ENCODE measurements at regions of chr10 and their contacts with region 1.

Region 1: DNA sequence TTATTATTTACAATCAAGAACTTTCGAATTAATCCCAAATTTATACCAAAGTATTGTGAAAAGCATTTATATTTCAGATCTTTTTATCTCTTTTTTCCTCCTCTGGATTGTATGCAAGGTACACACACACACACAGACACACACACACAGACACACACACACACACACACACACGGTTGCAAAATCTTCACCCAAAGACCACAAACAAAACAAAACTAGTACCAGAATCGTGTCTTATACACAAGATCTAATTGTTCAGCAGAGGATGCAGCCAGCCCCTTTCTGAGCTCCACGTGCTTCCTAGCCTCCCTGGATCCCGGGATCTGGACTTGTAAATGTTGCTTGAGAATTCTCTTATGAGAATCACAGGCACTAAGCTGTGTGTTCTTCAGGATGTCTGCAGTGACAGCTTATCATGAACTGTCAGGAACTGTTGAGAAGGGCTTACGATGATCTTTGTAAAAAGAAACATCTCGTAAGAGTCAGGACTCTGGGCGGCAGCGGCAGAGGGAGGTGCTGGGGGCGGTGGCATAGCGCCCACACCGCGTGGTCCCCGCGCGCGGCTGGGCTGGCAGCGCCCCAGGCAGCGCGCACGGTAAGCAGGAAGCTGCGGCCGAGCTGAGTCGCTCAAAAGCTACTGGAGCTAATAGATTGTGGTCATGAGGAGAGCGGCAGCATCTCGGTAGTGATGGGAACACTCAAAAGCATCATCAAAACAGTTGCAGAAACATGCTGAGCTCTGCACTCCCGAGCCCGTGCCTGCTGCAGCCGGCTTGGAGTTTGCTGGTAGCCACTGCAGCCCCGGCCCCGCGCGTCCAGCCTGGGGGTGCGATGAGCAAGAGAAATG is 277.6 kb downstream of the GATA3 start:
- DNase-seq: peak; percentile 89
- ATAC-seq: peak; percentile 94
- H3K4me3 Mint-ChIP-seq: peak overlapping the region; percentile 79
- H3K27ac Mint-ChIP-seq: peak overlapping the region; percentile 78
- H3K4me1 Mint-ChIP-seq: peaks cover 60% of the 10 kb centered on the region
- H3K27me3 Mint-ChIP-seq: peaks cover 2% of the 10 kb centered on the region

Region 2: DNA sequence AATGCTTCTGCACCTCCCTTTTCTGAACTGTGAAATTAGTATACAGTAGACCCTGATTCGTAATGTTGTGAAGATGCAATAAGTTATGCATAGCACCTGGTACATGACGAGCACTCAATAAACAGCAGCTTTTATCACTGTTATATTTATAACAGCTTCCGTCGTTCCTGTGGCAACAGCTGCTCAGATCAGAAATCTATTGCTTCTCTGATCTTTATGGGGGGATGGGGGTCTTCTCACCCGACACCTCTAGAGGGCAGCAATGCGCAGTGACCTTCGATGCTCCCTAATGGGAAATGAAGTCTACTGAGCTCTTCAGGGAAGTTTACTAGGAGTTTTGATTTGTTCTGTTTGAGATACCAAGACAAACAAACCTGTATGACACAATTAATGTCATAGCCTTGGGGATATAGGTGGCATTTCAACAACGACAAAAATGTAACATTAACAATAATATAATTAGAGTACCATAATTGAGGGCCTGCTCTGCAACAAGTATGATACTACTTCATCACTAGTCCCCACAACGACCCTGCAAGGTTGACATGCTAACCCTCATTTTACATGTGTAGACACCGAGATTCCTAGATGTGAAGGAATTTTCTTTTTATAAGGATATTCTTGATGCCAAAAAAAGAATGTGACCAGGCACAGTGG is 1210.8 kb before region 1 on chr10:
- CTCF ChIA-PET with region 1: no interaction called
- POLR2A ChIA-PET with region 1: no interaction called
- intact Hi-C with region 1: no loop called
- DNase-seq: peak; percentile 83
- ATAC-seq: peak; percentile 91
- H3K4me3 Mint-ChIP-seq: no peak overlapping the region
- H3K27ac Mint-ChIP-seq: no peak overlapping the region
- H3K4me1 Mint-ChIP-seq: peaks cover 5% of the 10 kb centered on the region
- H3K27me3 Mint-ChIP-seq: peaks cover 2% of the 10 kb centered on the region

Region 3: DNA sequence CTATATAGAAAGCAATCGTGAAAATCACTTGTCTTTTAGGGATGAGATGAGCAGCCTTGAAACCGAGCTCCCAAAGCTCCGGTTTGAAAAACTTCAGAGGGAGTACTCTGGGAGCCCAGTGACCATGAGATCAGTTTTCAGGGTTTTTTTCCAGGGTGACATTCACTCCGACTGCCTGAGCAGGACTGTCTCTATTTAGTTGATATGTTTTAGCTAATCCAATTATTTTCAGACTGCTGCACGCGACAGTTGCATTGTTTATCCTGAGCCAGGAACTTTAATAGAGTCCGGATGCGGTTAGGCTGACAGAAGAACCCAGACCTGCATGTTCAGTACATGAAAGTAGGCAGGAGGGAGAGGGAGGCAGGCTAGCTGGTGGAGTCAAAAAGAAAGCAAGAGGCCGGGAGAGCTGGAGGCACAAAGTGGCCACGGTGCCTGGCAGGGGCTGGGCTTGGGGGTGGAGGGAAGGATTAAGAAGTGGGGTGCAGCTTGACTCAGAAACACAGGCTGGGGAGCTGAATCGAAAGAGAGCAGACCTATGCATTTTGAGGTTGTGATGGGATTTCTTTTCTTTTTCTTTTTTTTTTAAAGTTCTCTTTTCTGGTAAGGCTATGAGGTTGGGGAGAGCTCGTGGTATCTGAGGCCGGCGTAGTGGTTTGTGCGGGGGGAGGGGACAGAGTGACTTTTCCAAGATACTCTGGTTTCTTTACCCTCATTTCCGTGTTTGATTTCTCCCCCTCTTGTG is 272.0 kb before region 1 on chr10:
- CTCF ChIA-PET with region 1: interaction called, 3 read pairs
- POLR2A ChIA-PET with region 1: no interaction called
- intact Hi-C with region 1: loop called in 1 of 2 experiments (anchors 2 kb)
- DNase-seq: peak; percentile 83
- ATAC-seq: peak; percentile 55
- H3K4me3 Mint-ChIP-seq: peak overlapping the region; percentile 96
- H3K27ac Mint-ChIP-seq: peak overlapping the region; percentile 81
- H3K4me1 Mint-ChIP-seq: peaks cover 77% of the 10 kb centered on the region
- H3K27me3 Mint-ChIP-seq: no peaks in the 10 kb centered on the region

Region 4: DNA sequence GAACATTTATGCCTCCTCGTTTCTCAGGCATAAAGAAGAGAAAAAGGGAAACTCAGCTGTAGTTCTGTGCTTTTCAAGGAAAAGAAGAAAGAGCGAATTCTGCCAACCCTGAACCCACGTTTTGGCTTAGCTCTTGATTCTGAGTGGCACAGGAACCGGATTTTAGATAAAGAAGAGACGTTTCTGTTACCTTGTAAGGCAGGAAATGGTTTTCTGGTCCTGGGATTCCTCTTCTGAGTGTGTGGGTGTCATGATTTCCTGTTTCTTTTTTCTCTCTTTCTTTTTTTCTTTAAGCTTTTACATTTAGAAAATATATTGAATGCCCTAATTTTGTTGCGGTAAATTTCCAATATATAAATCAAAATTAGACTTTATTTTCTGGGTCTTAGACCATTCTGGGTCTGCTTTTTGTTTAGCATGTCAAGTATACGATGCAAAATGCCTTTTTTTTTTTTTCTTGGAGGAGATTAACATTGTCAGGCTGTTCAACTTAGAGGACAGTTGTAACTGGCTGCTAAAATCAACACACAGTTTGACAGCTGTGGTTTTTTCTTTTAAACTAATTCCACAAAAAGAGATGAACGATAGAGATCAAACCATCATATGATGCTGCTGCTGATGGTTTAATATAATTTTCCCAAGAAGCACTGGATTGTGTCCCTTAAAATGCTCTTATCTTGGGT is 86.8 kb before region 1 on chr10:
- CTCF ChIA-PET with region 1: no interaction called
- POLR2A ChIA-PET with region 1: no interaction called
- intact Hi-C with region 1: loop called (anchors 5 kb)
- DNase-seq: no peak
- ATAC-seq: no peak
- H3K4me3 Mint-ChIP-seq: peak overlapping the region; percentile 48
- H3K27ac Mint-ChIP-seq: peak overlapping the region; percentile 70
- H3K4me1 Mint-ChIP-seq: peaks cover 49% of the 10 kb centered on the region
- H3K27me3 Mint-ChIP-seq: no peaks in the 10 kb centered on the region

Region 5: GRCh38 chr10:8369666-8370065 is 37.6 kb after region 1 on chr10:
- CTCF ChIA-PET with region 1: no interaction called
- POLR2A ChIA-PET with region 1: no interaction called
- intact Hi-C with region 1: no loop called
- DNase-seq: no peak
- ATAC-seq: no peak
- H3K4me3 Mint-ChIP-seq: no peak overlapping the region
- H3K27ac Mint-ChIP-seq: no peak overlapping the region
- H3K4me1 Mint-ChIP-seq: peaks cover 25% of the 10 kb centered on the region
- H3K27me3 Mint-ChIP-seq: no peaks in the 10 kb centered on the region

Region 6: DNA sequence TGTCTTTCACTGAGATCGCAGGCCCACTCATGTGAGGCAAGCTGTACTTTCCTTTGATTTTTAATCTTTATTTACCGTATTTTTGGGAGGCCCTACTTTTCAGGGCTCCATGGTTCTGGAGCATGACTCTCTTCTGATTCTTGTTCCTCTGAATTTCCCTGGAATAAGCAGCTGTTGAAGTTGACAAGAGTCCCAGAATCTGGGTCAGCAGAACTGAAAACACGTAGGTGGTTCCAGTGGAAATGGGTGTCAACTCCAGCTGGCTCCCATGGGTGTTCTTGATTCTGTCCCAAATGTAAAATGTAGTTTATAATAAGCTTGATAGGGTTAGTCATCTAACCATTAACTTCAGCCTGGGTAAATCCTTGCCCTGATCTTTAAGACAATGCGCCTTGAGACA is 131.7 kb after region 1 on chr10:
- CTCF ChIA-PET with region 1: no interaction called
- POLR2A ChIA-PET with region 1: no interaction called
- intact Hi-C with region 1: no loop called
- DNase-seq: no peak
- ATAC-seq: no peak
- H3K4me3 Mint-ChIP-seq: no peak overlapping the region
- H3K27ac Mint-ChIP-seq: no peak overlapping the region
- H3K4me1 Mint-ChIP-seq: no peaks in the 10 kb centered on the region
- H3K27me3 Mint-ChIP-seq: peaks cover 2% of the 10 kb centered on the region

Region 7: GRCh38 chr10:8577686-8578085 is 245.6 kb after region 1 on chr10:
- CTCF ChIA-PET with region 1: no interaction called
- POLR2A ChIA-PET with region 1: no interaction called
- intact Hi-C with region 1: loop called (anchors 5 to 10 kb)
- DNase-seq: peak; percentile 12
- ATAC-seq: peak; percentile 71
- H3K4me3 Mint-ChIP-seq: no peak overlapping the region
- H3K27ac Mint-ChIP-seq: peak overlapping the region; percentile 59
- H3K4me1 Mint-ChIP-seq: peaks cover 36% of the 10 kb centered on the region
- H3K27me3 Mint-ChIP-seq: peaks cover 31% of the 10 kb centered on the region

Region 8: GRCh38 chr10:8852546-8852945 is 520.4 kb after region 1 on chr10:
- CTCF ChIA-PET with region 1: no interaction called
- POLR2A ChIA-PET with region 1: no interaction called
- intact Hi-C with region 1: no loop called
- DNase-seq: no peak
- ATAC-seq: no peak
- H3K4me3 Mint-ChIP-seq: no peak overlapping the region
- H3K27ac Mint-ChIP-seq: no peak overlapping the region
- H3K4me1 Mint-ChIP-seq: no peaks in the 10 kb centered on the region
- H3K27me3 Mint-ChIP-seq: peaks cover 6% of the 10 kb centered on the region

Region 9: DNA sequence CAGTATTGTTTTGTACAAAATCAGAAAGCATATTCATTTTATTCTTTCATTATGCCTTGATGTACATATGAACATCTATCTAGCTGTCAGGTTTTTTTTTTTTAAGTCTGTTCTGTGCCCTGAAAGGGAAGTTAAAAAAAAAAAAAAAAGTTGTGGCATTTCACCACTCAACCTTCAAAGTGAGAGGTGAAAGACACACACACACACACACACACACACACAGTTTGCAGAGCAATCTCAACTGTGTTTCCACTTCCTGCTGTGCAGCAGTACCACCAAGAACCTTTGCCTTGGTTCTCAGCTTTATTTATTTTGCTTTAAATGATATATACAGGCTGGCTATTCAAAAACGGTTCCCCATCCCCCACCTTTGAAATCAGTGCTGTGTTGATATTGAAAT is 678.0 kb after region 1 on chr10:
- CTCF ChIA-PET with region 1: no interaction called
- POLR2A ChIA-PET with region 1: no interaction called
- intact Hi-C with region 1: loop called in 1 of 2 experiments (anchors 10 kb)
- DNase-seq: peak; percentile 42
- ATAC-seq: peak; percentile 80
- H3K4me3 Mint-ChIP-seq: peak overlapping the region; percentile 30
- H3K27ac Mint-ChIP-seq: peak overlapping the region; percentile 78
- H3K4me1 Mint-ChIP-seq: peaks cover 64% of the 10 kb centered on the region
- H3K27me3 Mint-ChIP-seq: peaks cover 2% of the 10 kb centered on the region

Region 10: GRCh38 chr10:9091530-9092093 is 759.5 kb after region 1 on chr10:
- CTCF ChIA-PET with region 1: interaction called, 3 read pairs
- POLR2A ChIA-PET with region 1: no interaction called
- intact Hi-C with region 1: loop called (anchors 5 to 10 kb)
- DNase-seq: peak; percentile 57
- ATAC-seq: peak; percentile 97
- H3K4me3 Mint-ChIP-seq: peak overlapping the region; percentile 27
- H3K27ac Mint-ChIP-seq: peak overlapping the region; percentile 52
- H3K4me1 Mint-ChIP-seq: peaks cover 51% of the 10 kb centered on the region
- H3K27me3 Mint-ChIP-seq: peaks cover 3% of the 10 kb centered on the region

Measured in activated CD4-positive, alpha-beta T cell treated with anti-CD3 and anti-CD28 coated beads for 36 hours (primary cell).